Breast epithelium (tissue), 4 donors: ENCODE measurements at regions of chr13 and their contacts with region 1.

Region 1: GRCh38 chr13:100788540-100788939 is 113.9 kb upstream of the TMTC4 start:
- DNase-seq: no peak
- H3K4me3 ChIP-seq: no peak overlapping the region
- H3K27ac ChIP-seq: no peak overlapping the region
- H3K4me1 ChIP-seq: no peaks in the 10 kb centered on the region
- H3K27me3 ChIP-seq: no peaks in the 10 kb centered on the region
- CTCF ChIP-seq: no peak
- POLR2A ChIP-seq: no peak

Region 2: GRCh38 chr13:100818711-100819110 is 30.2 kb after region 1 on chr13:
- intact Hi-C with region 1: loop called (anchors 2 kb)
- DNase-seq: peak in 1 of 2 donors; percentile 47
- H3K4me3 ChIP-seq: no peak overlapping the region
- H3K27ac ChIP-seq: no peak overlapping the region
- H3K4me1 ChIP-seq: no peaks in the 10 kb centered on the region
- H3K27me3 ChIP-seq: no peaks in the 10 kb centered on the region
- CTCF ChIP-seq: no peak
- POLR2A ChIP-seq: no peak

Region 3: DNA sequence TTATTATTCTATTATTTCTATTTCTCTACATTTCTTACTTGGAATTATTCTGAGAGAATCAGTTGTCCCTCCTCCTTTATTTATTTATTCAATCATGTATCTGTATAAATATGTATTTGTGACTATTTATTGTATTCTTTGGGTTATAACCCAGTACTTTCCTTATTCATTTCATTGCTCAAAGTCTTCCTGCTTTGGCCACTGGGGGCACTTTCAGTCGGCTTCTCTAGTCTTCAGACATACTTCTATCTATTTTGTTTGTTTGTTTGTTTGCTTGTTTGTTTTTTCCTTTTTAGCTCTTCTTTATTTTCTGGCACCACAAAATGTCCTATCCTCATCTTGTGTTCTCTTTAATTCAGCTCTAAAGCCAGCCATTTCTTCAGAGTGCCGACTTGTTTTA is 367.4 kb after region 1 on chr13:
- intact Hi-C with region 1: no loop called
- DNase-seq: no peak
- H3K4me3 ChIP-seq: no peak overlapping the region
- H3K27ac ChIP-seq: no peak overlapping the region
- H3K4me1 ChIP-seq: no peaks in the 10 kb centered on the region
- H3K27me3 ChIP-seq: no peaks in the 10 kb centered on the region
- CTCF ChIP-seq: no peak
- POLR2A ChIP-seq: no peak